Right lobe of liver (tissue), 6 donors: ENCODE measurements at regions of chr5 and their contacts with region 1.

Region 1: GRCh38 chr5:139765409-139766217 is 30.0 kb upstream of the PSD2 start:
- DNase-seq: peak; percentile 76 to 84 (median 80)
- ATAC-seq: peak; percentile 86 to 91 (median 90)
- H3K4me3 ChIP-seq: peak overlapping the region; percentile 45 to 62 (median 52)
- H3K27ac ChIP-seq: peak overlapping the region in 1 of 3 donors; percentile 21
- H3K4me1 ChIP-seq: peaks cover 0 to 14% (median 7%) of the 10 kb centered on the region in 4 donors
- H3K27me3 ChIP-seq: no peaks in the 10 kb centered on the region
- CTCF ChIP-seq: peak; percentile 94 to 99 (median 97)
- POLR2A ChIP-seq: no peak

Region 2: GRCh38 chr5:139551191-139551889 is 214.3 kb before region 1 on chr5:
- intact Hi-C with region 1: no loop called
- DNase-seq: no peak
- ATAC-seq: no peak
- H3K4me3 ChIP-seq: no peak overlapping the region
- H3K27ac ChIP-seq: no peak overlapping the region
- H3K4me1 ChIP-seq: peaks cover 0 to 5% (median 0%) of the 10 kb centered on the region in 4 donors
- H3K27me3 ChIP-seq: no peaks in the 10 kb centered on the region
- CTCF ChIP-seq: no peak
- POLR2A ChIP-seq: no peak

Region 3: GRCh38 chr5:139588962-139589361 is 176.7 kb before region 1 on chr5:
- intact Hi-C with region 1: no loop called
- DNase-seq: peak in 1 of 3 donors; percentile 28
- ATAC-seq: no peak
- H3K4me3 ChIP-seq: no peak overlapping the region
- H3K27ac ChIP-seq: no peak overlapping the region
- H3K4me1 ChIP-seq: peaks cover 0 to 4% (median 0%) of the 10 kb centered on the region in 4 donors
- H3K27me3 ChIP-seq: no peaks in the 10 kb centered on the region
- CTCF ChIP-seq: no peak
- POLR2A ChIP-seq: no peak

Region 4: DNA sequence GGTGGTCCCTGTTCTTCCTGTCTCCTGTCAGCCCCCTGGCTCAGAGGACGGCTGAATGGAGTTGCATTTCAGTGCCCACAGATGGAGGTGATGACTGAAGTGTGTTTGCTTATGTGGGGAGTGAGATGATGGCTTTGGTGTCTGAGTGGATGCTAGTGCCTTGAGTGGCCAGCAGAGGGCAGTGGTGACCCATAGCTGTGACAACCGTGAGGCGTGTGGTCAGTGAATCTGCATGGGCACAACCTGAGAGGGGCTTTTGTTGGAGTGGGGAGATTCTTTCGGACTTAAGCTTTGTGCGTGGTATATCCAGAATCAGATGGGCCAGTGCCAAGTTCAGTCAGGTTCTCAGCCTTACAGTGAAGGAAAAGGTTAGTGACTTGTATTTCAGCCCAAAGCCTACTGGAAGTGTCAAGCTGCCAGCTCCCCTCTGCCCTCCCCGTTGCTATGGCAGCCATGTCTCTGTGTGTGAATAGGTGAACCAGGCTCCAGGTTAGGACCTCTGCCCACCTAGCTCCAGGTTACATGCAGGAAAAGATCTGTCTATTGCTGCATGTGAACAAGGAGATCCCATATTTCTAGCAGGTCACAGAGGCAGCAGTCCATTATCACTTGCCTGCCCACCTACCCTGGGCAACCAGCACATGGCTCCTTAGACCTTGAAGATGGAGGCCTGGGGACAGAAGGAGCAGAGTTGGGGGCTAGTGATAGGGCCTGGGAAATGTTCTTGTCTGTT is 132.2 kb before region 1 on chr5:
- intact Hi-C with region 1: loop called (anchors 5 kb)
- DNase-seq: peak; percentile 69 to 72 (median 72)
- ATAC-seq: peak; percentile 46 to 65 (median 52)
- H3K4me3 ChIP-seq: no peak overlapping the region
- H3K27ac ChIP-seq: no peak overlapping the region
- H3K4me1 ChIP-seq: peaks cover 8 to 33% (median 14%) of the 10 kb centered on the region in 4 donors
- H3K27me3 ChIP-seq: no peaks in the 10 kb centered on the region
- CTCF ChIP-seq: peak; percentile 94 to 98 (median 98)
- POLR2A ChIP-seq: no peak

Region 5: GRCh38 chr5:139696894-139697658 is 68.5 kb before region 1 on chr5:
- intact Hi-C with region 1: loop called in 1 of 2 experiments (anchors 10 kb)
- DNase-seq: peak in 1 of 3 donors; percentile 73
- ATAC-seq: peak; percentile 29 to 59 (median 46)
- H3K4me3 ChIP-seq: peak overlapping the region in 1 of 3 donors; percentile 19
- H3K27ac ChIP-seq: peak overlapping the region; percentile 33 to 63 (median 47)
- H3K4me1 ChIP-seq: peaks cover 0 to 31% (median 5%) of the 10 kb centered on the region in 4 donors
- H3K27me3 ChIP-seq: no peaks in the 10 kb centered on the region
- CTCF ChIP-seq: no peak
- POLR2A ChIP-seq: no peak